ENCODE measurements at regions of chr12 and their contacts with region 1.

Region 1: DNA sequence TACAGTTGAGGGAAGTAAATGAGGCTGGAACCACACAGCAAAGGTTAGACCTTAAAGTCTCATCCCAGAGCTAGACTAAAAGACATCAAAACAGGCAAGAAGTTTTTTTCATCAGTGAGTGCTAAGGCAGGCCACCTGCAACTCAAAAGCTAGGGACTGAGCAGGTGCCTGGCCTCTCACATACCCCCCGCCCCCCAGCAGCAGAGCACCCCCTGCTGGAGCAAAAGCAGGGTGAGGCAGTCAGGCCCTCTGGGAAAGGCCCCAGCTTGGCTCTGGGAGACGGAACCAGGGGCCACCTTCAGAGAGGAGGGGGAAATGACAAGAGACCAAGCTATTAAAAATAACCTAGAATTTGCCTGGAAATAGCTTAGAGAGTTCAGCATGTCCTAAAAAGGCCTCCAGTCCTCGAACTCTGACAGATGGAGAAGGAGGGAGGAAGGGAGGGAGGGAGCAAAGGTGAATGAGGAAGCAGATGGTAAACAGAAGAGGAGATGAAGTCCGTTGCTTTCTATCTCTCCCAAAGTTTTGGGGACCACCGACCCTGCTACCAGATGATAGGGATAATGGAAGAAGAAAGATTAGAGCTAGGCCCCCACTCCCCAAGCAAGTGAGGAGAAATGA is 1.8 kb downstream of the ITGA7 start:
- DNase-seq: peak; percentile 46 to 87
- ATAC-seq: peak; percentile 14 to 38 (median 28)
- H3K4me3 ChIP-seq: peak overlapping the region; percentile 85
- H3K27ac ChIP-seq: peak overlapping the region; percentile 92
- H3K4me1 ChIP-seq: peaks cover 43% of the 10 kb centered on the region
- H3K27me3 ChIP-seq: no peaks in the 10 kb centered on the region
- CTCF ChIP-seq: peak; percentile 59

Region 2: DNA sequence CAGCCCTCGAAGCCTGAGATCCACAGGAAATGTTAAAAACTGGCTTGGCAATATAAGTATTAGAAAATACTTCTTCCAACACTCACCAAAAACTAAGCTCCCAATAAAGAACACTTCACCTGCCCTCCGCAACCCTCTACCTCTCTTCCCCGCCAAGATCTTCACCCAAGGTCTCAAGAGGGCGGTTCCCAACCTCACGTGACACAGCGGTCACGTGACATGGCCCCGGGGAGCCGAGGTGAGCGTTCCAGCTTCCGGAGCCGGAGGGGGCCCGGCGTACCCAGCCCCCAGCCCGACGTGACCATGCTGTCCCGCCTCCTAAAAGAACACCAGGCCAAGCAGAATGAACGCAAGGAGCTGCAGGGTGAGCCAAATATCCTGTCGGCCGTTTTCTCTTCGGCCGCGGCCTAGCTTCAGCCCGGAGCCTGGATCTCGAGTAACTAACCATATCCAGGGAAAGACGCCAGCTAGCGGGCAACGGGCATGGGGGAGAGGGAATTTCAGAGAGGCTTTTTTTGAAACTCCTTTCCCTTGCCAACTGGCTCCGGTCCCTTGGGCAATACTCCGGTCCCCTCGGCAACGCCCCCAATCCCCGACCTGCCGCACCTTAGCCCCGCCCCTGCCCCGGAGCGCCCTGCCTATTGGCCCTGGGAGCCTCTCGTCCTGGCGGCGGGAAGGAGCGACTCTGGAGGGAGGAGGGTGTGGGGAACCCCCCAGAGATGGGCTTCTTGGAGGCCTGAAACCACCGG is 10.1 kb after region 1 on chr12 and contains the start of gene BLOC1S1:
- intact Hi-C with region 1: loop called in 1 of 2 experiments (anchors 1 kb)
- DNase-seq: peak; percentile 94 to 97
- ATAC-seq: peak; percentile 50 to 67 (median 60)
- H3K4me3 ChIP-seq: peak within 1 kb of the TSS; percentile 69
- H3K27ac ChIP-seq: peak within 1 kb of the TSS; percentile 92
- H3K4me1 ChIP-seq: peaks cover 83% of the 10 kb centered on the region
- H3K27me3 ChIP-seq: no peaks in the 10 kb centered on the region
- CTCF ChIP-seq: peak; percentile 6
- total RNA-seq, gene BLOC1S1: 127 to 193 (median 165) TPM

Region 3: DNA sequence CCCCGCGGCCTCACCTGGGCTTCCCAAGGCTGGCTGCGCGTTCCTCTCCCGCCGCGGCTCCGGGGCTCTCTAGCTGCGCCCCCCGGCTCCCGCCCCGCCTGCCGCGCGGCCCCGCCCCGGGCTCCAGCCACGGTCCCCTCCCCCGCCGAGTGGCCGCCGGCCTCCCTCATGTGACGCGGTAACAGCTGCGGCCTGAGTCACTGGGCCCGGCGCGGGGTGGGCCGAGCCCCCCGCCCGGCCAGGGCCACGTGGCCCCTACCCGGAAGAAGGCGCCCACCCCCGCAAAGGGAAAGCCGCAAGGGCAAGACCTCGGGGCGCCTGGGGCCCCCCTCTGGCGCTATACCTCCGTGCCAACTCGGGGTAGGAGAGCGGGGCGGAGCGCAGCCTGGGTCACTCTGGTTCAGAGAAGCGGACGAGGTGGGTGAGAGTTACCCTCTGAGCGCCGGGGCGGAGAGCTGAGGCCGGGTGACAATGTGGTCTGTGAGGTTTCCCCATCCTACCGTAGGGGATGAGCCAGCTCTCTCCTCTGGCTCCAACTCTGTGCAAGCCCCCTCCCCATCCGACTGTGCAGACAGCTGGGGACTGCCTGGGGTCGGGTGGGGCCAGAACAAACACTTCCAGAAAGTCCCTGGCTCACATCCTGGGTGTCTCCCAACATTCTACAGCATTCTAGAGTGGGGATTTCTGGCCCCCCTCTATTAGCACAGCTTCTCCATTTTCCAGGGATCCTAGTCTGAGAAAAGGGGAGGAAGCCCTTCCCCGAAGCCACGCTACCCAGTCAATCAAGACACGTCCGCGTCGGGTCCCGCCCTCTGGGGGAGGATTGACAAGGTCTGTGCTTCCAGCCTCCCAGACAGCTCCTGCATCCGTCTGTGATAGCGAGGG is 23.3 kb after region 1 on chr12 and contains the start of gene CD63:
- intact Hi-C with region 1: loop called in 1 of 2 experiments (anchors 2 kb)
- DNase-seq: peak; percentile 95 to 96
- ATAC-seq: peak; percentile 83 to 88 (median 86)
- H3K4me3 ChIP-seq: peak within 1 kb of the TSS; percentile 98
- H3K27ac ChIP-seq: peak within 1 kb of the TSS; percentile 94
- H3K4me1 ChIP-seq: peaks cover 47% of the 10 kb centered on the region
- H3K27me3 ChIP-seq: no peaks in the 10 kb centered on the region
- CTCF ChIP-seq: no peak
- total RNA-seq, gene CD63: 592 to 1,401 (median 983) TPM

Measured in psoas muscle (tissue), 8 donors.